Activated CD4-positive, alpha-beta T cell treated with anti-CD3 and anti-CD28 coated beads, Interleukin-2, amount 10 ng/mL, durations not matched to agents 24 days and 14 days (primary cell): ENCODE measurements at regions of chr22 and their contacts with region 1.

Region 1: GRCh38 chr22:50582562-50583293 is at the start of gene CHKB:
- DNase-seq: peak; percentile 100
- H3K4me3 Mint-ChIP-seq: peak within 1 kb of the TSS; percentile 93
- H3K27ac Mint-ChIP-seq: peak within 1 kb of the TSS; percentile 93
- H3K4me1 Mint-ChIP-seq: peaks cover 14% of the 10 kb centered on the region
- H3K27me3 Mint-ChIP-seq: no peaks in the 10 kb centered on the region
- total RNA-seq, gene CHKB: 83.2 and 84.7 TPM in 2 replicates

Region 2: GRCh38 chr22:50469377-50470305 is 113.1 kb before region 1 on chr22:
- intact Hi-C with region 1: loop called (anchors 1 kb)
- DNase-seq: peak; percentile 98
- H3K4me3 Mint-ChIP-seq: peak overlapping the region; percentile 77
- H3K27ac Mint-ChIP-seq: peak overlapping the region; percentile 89
- H3K4me1 Mint-ChIP-seq: peaks cover 54% of the 10 kb centered on the region
- H3K27me3 Mint-ChIP-seq: no peaks in the 10 kb centered on the region

Region 3: GRCh38 chr22:50485201-50486131 is 97.3 kb before region 1 on chr22:
- intact Hi-C with region 1: no loop called
- DNase-seq: no peak
- H3K4me3 Mint-ChIP-seq: no peak overlapping the region
- H3K27ac Mint-ChIP-seq: no peak overlapping the region
- H3K4me1 Mint-ChIP-seq: peaks cover 3% of the 10 kb centered on the region
- H3K27me3 Mint-ChIP-seq: peaks cover 2% of the 10 kb centered on the region

Region 4: GRCh38 chr22:50530877-50531545 is 51.7 kb before region 1 on chr22:
- intact Hi-C with region 1: loop called (anchors 2 kb)
- DNase-seq: peak; percentile 96
- H3K4me3 Mint-ChIP-seq: peak overlapping the region; percentile 96
- H3K27ac Mint-ChIP-seq: peak overlapping the region; percentile 100
- H3K4me1 Mint-ChIP-seq: peaks cover 47% of the 10 kb centered on the region
- H3K27me3 Mint-ChIP-seq: no peaks in the 10 kb centered on the region

Region 5: DNA sequence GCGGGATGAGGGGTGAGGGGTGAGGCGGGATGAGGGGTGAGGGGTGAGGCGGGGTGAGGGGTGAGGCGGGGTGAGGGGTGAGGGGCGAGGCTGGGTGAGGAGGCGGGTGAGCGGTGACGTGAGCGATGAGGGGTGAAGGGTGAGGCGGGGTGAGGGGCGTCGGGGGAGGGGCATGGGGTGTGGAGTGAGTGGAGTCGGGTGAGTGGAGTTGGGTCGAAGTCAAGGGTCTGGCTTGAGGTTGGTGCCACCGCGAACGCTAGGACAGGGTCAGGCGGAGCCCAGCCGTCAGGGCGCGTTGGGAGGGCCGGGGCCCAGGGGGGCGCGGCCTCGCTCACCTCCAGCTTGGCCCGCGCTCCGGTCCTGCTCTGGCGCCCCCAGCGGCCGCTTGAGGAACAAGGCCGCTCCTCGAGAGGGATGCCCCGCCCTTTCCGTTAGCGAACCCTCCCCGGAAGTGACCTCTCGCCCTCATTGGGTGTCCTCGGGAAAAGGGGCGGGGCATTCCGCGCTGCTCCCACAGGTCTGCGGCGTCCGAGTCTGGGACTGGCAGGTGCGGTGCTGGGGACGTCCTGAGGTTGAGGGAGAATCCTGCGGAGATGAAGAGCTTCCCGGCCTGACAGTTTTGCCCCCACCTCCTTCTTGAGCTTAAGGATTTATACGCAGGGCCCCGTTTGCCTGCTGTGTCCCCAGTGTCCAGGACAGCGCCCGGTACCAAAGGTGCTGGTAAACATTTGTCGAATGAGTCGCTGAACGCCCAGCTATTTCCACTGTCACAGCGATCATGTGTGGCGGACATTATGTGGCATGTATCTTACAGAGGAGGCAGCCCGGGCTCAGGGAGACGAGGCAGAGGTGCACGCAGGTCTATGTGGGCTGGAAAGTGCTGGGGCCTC is 20.0 kb before region 1 on chr22 and contains the start of gene SYCE3:
- intact Hi-C with region 1: loop called (anchors 1 kb)
- DNase-seq: peak; percentile 100
- H3K4me3 Mint-ChIP-seq: peak within 1 kb of the TSS; percentile 94
- H3K27ac Mint-ChIP-seq: peak within 1 kb of the TSS; percentile 85
- H3K4me1 Mint-ChIP-seq: peaks cover 21% of the 10 kb centered on the region
- H3K27me3 Mint-ChIP-seq: peaks cover 14% of the 10 kb centered on the region
- total RNA-seq, gene SYCE3: 0.69 TPM in 1 of 2 replicates, not detected in the other

Region 6: GRCh38 chr22:50599786-50600455 is 17.2 kb after region 1 on chr22:
- intact Hi-C with region 1: no loop called
- DNase-seq: peak; percentile 93
- H3K4me3 Mint-ChIP-seq: peak overlapping the region; percentile 67
- H3K27ac Mint-ChIP-seq: no peak overlapping the region
- H3K4me1 Mint-ChIP-seq: peaks cover 11% of the 10 kb centered on the region
- H3K27me3 Mint-ChIP-seq: peaks cover 39% of the 10 kb centered on the region

Region 7: GRCh38 chr22:50627642-50628542 is 45.2 kb after region 1 on chr22 and contains the start of gene ARSA:
- intact Hi-C with region 1: loop called (anchors 2 kb)
- DNase-seq: peak; percentile 94
- H3K4me3 Mint-ChIP-seq: peak within 1 kb of the TSS; percentile 94
- H3K27ac Mint-ChIP-seq: peak within 1 kb of the TSS; percentile 75
- H3K4me1 Mint-ChIP-seq: peaks cover 16% of the 10 kb centered on the region
- H3K27me3 Mint-ChIP-seq: no peaks in the 10 kb centered on the region
- total RNA-seq, gene ARSA: 20.6 and 22.1 TPM in 2 replicates